Dendritic cell treated with granulocyte-macrophage colony-stimulating factor and Interleukin-4, amounts not matched to agents 40 ng/mL and 50 ng/mL, for 4 days (primary cell): ENCODE measurements at regions of chr5 and their contacts with region 1.

Region 1: DNA sequence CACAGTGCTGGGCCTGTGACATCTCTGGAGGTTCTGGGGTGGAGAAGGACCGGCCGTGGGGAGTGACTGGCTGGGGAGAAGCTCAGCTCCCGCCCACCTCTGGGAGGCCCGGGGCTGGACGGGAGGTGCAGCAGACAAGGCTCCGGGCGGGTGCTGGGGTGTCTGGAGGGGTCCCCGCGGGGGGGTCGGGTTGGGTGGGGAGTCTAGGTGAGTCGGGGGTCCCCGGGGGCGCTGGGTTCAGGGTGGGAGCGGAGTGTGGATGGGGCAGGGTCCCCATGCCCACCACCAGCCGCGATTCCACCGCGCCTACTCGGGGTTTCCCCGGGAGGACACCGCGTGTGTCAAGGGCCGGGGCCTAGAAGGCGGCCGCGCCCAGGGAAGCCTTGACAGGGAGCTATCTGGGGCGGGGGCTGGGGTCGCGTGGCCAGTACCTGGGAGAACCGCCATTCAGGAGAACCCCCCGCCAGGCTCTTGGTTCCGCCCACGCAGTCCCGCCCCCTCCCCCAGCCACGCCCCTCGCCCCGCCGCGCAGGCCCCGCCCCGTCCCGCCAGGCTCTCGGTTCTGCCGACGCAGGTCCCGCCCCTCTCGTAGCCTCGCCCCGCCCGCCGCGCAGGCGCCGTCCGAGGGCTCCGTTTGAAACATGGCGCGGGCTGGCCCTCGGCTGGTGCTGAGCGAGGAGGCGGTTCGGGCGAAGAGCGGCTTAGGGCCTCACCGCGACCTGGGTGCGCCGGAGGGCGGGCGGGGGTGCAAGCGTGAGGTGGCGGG is at the start of gene CEP72:
- H3K4me3 Mint-ChIP-seq: peak within 1 kb of the TSS; percentile 84
- H3K27ac Mint-ChIP-seq: peak within 1 kb of the TSS; percentile 50
- H3K4me1 Mint-ChIP-seq: peaks cover 59% of the 10 kb centered on the region
- H3K27me3 Mint-ChIP-seq: peaks cover 51% of the 10 kb centered on the region

Region 2: GRCh38 chr5:402615-403359 is 209.1 kb before region 1 on chr5:
- intact Hi-C with region 1: no loop called
- H3K4me3 Mint-ChIP-seq: peak overlapping the region; percentile 74
- H3K27ac Mint-ChIP-seq: peak overlapping the region; percentile 99
- H3K4me1 Mint-ChIP-seq: peaks cover 83% of the 10 kb centered on the region
- H3K27me3 Mint-ChIP-seq: peaks cover 2% of the 10 kb centered on the region

Region 3: GRCh38 chr5:446864-447263 is 165.0 kb before region 1 on chr5:
- intact Hi-C with region 1: loop called (anchors 5 kb)
- H3K4me3 Mint-ChIP-seq: no peak overlapping the region
- H3K27ac Mint-ChIP-seq: peak overlapping the region; percentile 34
- H3K4me1 Mint-ChIP-seq: peaks cover 67% of the 10 kb centered on the region
- H3K27me3 Mint-ChIP-seq: no peaks in the 10 kb centered on the region

Region 4: DNA sequence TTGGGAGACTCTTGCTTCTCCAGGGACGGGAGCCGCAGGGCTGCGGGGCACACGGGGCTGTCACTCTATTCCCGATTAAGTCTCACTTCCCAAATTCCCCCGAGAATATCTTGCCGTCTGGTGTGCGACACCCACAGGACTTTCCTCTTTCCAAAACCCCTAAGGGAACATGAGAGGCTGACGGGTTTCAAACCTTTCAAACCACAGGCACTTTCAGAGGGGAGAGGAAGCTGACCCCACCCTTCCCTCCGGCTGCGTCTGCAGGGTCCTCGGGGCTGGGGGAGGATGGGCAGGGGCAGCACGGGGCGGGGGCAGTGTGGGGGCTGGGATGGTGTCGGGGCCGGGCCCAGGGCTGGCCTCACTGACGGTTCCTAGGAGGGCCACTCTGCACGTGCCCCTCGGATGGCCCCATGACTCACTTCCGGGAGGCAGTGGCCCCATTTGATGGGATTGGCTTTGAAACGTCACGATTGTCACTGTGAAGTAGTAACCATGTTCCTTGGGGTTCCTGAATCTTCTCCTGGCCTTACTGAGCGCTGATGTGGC is 125.9 kb before region 1 on chr5:
- intact Hi-C with region 1: loop called (anchors 10 kb)
- H3K4me3 Mint-ChIP-seq: no peak overlapping the region
- H3K27ac Mint-ChIP-seq: peak overlapping the region; percentile 35
- H3K4me1 Mint-ChIP-seq: peaks cover 20% of the 10 kb centered on the region
- H3K27me3 Mint-ChIP-seq: peaks cover 80% of the 10 kb centered on the region

Region 5: GRCh38 chr5:528625-529511 is 83.0 kb before region 1 on chr5:
- intact Hi-C with region 1: loop called (anchors 5 kb)
- H3K4me3 Mint-ChIP-seq: no peak overlapping the region
- H3K27ac Mint-ChIP-seq: no peak overlapping the region
- H3K4me1 Mint-ChIP-seq: peaks cover 43% of the 10 kb centered on the region
- H3K27me3 Mint-ChIP-seq: peaks cover 72% of the 10 kb centered on the region